Caco-2 (cell line): ENCODE measurements at regions of chr5 and their contacts with region 1.

Region 1: DNA sequence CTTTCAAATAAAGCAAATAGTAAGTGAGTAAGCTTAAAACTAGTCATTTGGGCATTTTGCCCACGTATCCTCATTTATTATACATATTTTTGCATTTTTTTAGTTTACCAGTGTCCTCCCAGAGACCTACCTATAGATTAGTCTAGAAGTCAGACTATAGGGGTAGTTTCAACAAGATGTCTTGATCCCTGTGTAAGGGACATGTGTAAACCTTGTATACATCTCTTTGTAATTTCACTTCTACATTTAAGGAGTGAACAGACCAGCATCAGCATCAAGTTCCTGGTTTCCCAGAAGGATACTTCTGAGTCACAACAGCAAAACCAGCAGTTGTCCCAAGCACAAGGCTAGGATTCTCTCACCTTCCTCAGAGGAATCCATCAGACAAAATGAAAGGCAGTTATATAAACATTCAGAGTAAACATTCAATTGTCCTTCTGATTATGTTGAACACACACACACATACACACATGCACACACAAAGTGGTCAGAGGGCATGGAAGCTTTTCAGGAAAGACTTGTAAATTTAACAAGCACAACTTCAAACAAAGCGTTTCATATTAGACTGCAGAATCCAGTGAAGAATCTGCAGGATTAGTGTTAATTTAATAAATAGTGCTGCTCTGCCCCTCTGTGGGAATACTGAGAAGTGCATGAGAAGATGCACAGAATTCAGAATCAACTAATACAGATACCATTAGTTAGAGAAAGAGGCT is 55.4 kb downstream of the HINT1 start:
- DNase-seq: peak in 1 of 2 experiments; percentile 45
- H3K4me3 ChIP-seq: no peak overlapping the region
- H3K4me3 Mint-ChIP-seq: no peak overlapping the region
- H3K27ac Mint-ChIP-seq: no peak overlapping the region
- H3K4me1 ChIP-seq: no peaks in the 10 kb centered on the region
- H3K4me1 Mint-ChIP-seq: no peaks in the 10 kb centered on the region
- H3K27me3 ChIP-seq: no peaks in the 10 kb centered on the region
- H3K27me3 Mint-ChIP-seq: peaks cover 2% of the 10 kb centered on the region
- CTCF ChIP-seq: peak; percentile 72 to 75

Region 2: DNA sequence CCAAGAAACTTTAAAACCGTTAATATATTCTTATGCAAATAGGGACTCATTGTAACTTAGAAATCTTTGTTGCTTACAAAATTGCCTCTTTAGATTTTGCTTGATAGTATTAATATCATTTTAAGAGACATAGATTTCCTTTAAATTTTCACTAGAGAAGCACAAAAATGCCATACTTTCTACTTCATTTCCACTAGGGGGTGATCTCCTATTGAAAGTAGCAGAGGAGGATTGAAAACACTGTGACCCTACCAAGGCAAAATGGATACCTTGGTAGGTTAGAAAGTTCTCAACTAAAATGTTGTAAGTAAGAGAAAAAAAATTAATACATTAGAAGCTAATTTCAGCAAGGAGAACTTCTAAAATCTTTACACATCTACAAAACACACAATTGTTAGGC is 1000.5 kb before region 1 on chr5:
- CTCF ChIA-PET with region 1: no interaction called
- POLR2A ChIA-PET with region 1: no interaction called
- intact Hi-C with region 1: loop called (anchors 1 kb)
- DNase-seq: peak in 1 of 2 experiments; percentile 16
- H3K4me3 ChIP-seq: no peak overlapping the region
- H3K4me3 Mint-ChIP-seq: no peak overlapping the region
- H3K27ac Mint-ChIP-seq: no peak overlapping the region
- H3K4me1 ChIP-seq: no peaks in the 10 kb centered on the region
- H3K4me1 Mint-ChIP-seq: no peaks in the 10 kb centered on the region
- H3K27me3 ChIP-seq: no peaks in the 10 kb centered on the region
- H3K27me3 Mint-ChIP-seq: no peaks in the 10 kb centered on the region
- CTCF ChIP-seq: peak; percentile 60 to 72

Region 3: DNA sequence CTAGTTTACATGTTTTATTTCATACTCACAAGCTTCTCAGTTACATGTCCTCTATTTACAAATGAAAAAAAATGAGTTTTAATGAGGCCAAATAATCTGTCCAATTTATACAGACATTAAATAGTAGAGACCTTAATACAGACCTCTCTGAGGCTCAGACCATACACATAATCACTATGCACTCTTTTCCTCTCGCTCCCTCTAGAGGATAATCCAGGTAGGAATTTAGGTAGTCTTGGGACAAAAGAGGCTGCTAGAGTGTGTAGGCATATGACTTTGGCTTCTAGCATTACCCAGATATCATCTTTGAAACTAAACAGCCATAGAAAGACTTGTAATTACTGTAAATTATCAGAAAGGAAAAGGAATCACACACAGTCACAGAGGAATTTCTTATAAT is 389.3 kb before region 1 on chr5:
- CTCF ChIA-PET with region 1: no interaction called
- POLR2A ChIA-PET with region 1: no interaction called
- intact Hi-C with region 1: loop called (anchors 2 kb)
- DNase-seq: peak in 1 of 2 experiments; percentile 56
- H3K4me3 ChIP-seq: no peak overlapping the region
- H3K4me3 Mint-ChIP-seq: no peak overlapping the region
- H3K27ac Mint-ChIP-seq: no peak overlapping the region
- H3K4me1 ChIP-seq: no peaks in the 10 kb centered on the region
- H3K4me1 Mint-ChIP-seq: no peaks in the 10 kb centered on the region
- H3K27me3 ChIP-seq: no peaks in the 10 kb centered on the region
- H3K27me3 Mint-ChIP-seq: no peaks in the 10 kb centered on the region
- CTCF ChIP-seq: peak; percentile 64 to 80

Region 4: GRCh38 chr5:130955041-130955440 is 154.7 kb before region 1 on chr5:
- CTCF ChIA-PET with region 1: no interaction called
- POLR2A ChIA-PET with region 1: no interaction called
- intact Hi-C with region 1: loop called (anchors 5 kb)
- DNase-seq: no peak
- H3K4me3 ChIP-seq: no peak overlapping the region
- H3K4me3 Mint-ChIP-seq: peak overlapping the region; percentile 10
- H3K27ac Mint-ChIP-seq: peak overlapping the region; percentile 51
- H3K4me1 ChIP-seq: peaks cover 21% of the 10 kb centered on the region
- H3K4me1 Mint-ChIP-seq: peaks cover 15% of the 10 kb centered on the region
- H3K27me3 ChIP-seq: no peaks in the 10 kb centered on the region
- H3K27me3 Mint-ChIP-seq: no peaks in the 10 kb centered on the region
- CTCF ChIP-seq: no peak

Region 5: GRCh38 chr5:131079232-131079631 is 30.5 kb before region 1 on chr5:
- CTCF ChIA-PET with region 1: no interaction called
- POLR2A ChIA-PET with region 1: no interaction called
- intact Hi-C with region 1: loop called (anchors 2 kb)
- DNase-seq: peak in 1 of 2 experiments; percentile 28
- H3K4me3 ChIP-seq: no peak overlapping the region
- H3K4me3 Mint-ChIP-seq: no peak overlapping the region
- H3K27ac Mint-ChIP-seq: no peak overlapping the region
- H3K4me1 ChIP-seq: no peaks in the 10 kb centered on the region
- H3K4me1 Mint-ChIP-seq: peaks cover 6% of the 10 kb centered on the region
- H3K27me3 ChIP-seq: no peaks in the 10 kb centered on the region
- H3K27me3 Mint-ChIP-seq: no peaks in the 10 kb centered on the region
- CTCF ChIP-seq: no peak

Region 6: GRCh38 chr5:131328536-131329285 is 219.0 kb after region 1 on chr5:
- CTCF ChIA-PET with region 1: no interaction called
- POLR2A ChIA-PET with region 1: no interaction called
- intact Hi-C with region 1: no loop called
- DNase-seq: peak in 1 of 2 experiments; percentile 9
- H3K4me3 ChIP-seq: no peak overlapping the region
- H3K4me3 Mint-ChIP-seq: no peak overlapping the region
- H3K27ac Mint-ChIP-seq: peak overlapping the region; percentile 8
- H3K4me1 ChIP-seq: no peaks in the 10 kb centered on the region
- H3K4me1 Mint-ChIP-seq: peaks cover 19% of the 10 kb centered on the region
- H3K27me3 ChIP-seq: no peaks in the 10 kb centered on the region
- H3K27me3 Mint-ChIP-seq: no peaks in the 10 kb centered on the region
- CTCF ChIP-seq: no peak